ENCODE measurements at regions of chr3 and their contacts with region 1.

Region 1: GRCh38 chr3:184656829-184657681 is 54.8 kb downstream of the MAGEF1 start:
- DNase-seq: peak; percentile 98
- H3K4me3 ChIP-seq: no peak overlapping the region
- H3K27ac ChIP-seq: peak overlapping the region; percentile 93
- H3K4me1 ChIP-seq: peaks cover 50% of the 10 kb centered on the region
- H3K27me3 ChIP-seq: no peaks in the 10 kb centered on the region
- CTCF ChIP-seq: no peak

Region 2: GRCh38 chr3:184428561-184429175 is 228.4 kb before region 1 on chr3:
- CTCF ChIA-PET with region 1: no interaction called
- dilution Hi-C with region 1: no loop called
- in situ Hi-C with region 1: no loop called
- intact Hi-C with region 1: no loop called
- DNase-seq: no peak
- H3K4me3 ChIP-seq: no peak overlapping the region
- H3K27ac ChIP-seq: no peak overlapping the region
- H3K4me1 ChIP-seq: peaks cover 5% of the 10 kb centered on the region
- H3K27me3 ChIP-seq: peaks cover 3% of the 10 kb centered on the region
- CTCF ChIP-seq: no peak

Region 3: DNA sequence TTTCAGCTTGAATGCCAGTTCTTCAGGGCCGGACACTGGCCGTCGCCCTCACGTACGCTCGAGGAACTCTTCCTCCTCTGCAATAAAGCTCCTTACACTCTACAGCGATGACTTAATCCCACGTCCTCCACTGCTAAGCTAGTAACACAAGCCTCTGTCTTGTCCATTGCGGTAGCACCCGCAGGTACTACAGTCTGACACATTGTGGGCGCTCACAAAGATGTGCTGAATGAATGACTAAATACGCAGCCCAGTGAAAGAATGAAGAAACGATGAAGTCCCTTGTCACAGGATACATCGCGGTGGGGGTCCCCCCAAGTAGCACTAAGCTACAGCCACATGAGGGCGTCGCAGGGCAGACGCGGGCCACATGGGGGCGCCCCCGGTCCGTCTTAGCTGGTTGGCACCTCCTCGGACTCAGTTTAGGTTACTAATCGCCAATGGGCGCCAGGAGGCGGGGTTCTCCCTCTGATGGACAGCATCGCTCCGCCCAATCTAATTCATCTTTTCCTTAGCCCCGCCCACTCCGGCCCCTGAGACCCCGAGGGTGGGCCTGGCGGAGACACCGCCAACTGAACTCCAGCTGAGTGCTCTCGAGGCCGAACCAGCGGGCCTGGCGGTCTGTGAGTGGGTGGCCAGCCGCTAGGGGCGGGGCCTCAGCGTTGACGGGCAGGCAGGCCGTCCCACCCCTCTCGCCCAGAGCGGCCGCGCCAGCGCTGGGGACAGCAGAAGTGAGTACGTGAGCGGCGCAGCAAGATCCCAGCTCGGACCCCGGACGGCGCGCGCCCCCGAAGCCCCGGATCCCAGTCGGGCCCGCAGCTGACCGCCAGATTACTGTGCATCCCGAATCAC is 95.8 kb before region 1 on chr3 and contains the start of gene EPHB3:
- CTCF ChIA-PET with region 1: no interaction called
- dilution Hi-C with region 1: no loop called
- in situ Hi-C with region 1: loop called in 1 of 2 experiments (anchors 5 kb)
- intact Hi-C with region 1: loop called (anchors 2 kb)
- DNase-seq: peak; percentile 99
- H3K4me3 ChIP-seq: peak within 1 kb of the TSS; percentile 67 to 92 (median 69)
- H3K27ac ChIP-seq: peak within 1 kb of the TSS; percentile 41
- H3K4me1 ChIP-seq: peaks cover 40% of the 10 kb centered on the region
- H3K27me3 ChIP-seq: no peaks in the 10 kb centered on the region
- CTCF ChIP-seq: peak; percentile 99 to 100
- total RNA-seq, gene EPHB3: 17.6 to 45.2 TPM

Region 4: DNA sequence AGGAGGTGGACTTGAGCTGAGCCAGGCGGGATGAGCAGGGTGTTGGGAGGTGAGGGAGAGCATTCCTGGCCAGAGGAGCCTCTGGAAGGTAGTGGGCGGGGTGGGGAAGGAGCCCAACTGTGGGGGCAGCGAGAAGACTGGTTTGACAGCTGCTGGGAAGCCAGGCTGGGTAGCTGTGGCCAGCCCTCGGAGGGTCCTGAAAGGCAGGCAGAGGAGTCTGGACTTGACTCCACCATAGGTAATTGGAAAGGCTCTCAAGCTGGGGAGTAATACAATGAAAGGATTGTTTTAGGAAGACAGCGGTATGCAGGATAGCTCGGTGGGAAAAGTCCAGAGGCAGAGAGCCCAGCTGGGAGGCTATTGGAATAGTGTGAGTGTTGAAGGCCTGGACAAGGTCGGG is 78.2 kb before region 1 on chr3:
- CTCF ChIA-PET with region 1: interaction called, 13 read pairs
- dilution Hi-C with region 1: no loop called
- in situ Hi-C with region 1: no loop called
- intact Hi-C with region 1: no loop called
- DNase-seq: peak; percentile 50
- H3K4me3 ChIP-seq: no peak overlapping the region
- H3K27ac ChIP-seq: peak overlapping the region; percentile 9
- H3K4me1 ChIP-seq: peaks cover 26% of the 10 kb centered on the region
- H3K27me3 ChIP-seq: no peaks in the 10 kb centered on the region
- CTCF ChIP-seq: no peak

Region 5: GRCh38 chr3:184611607-184612281 is 45.3 kb before region 1 on chr3:
- CTCF ChIA-PET with region 1: no interaction called
- dilution Hi-C with region 1: loop called (anchors 5 kb)
- in situ Hi-C with region 1: no loop called
- intact Hi-C with region 1: no loop called
- DNase-seq: no peak
- H3K4me3 ChIP-seq: no peak overlapping the region
- H3K27ac ChIP-seq: no peak overlapping the region
- H3K4me1 ChIP-seq: no peaks in the 10 kb centered on the region
- H3K27me3 ChIP-seq: no peaks in the 10 kb centered on the region
- CTCF ChIP-seq: no peak

Region 6: DNA sequence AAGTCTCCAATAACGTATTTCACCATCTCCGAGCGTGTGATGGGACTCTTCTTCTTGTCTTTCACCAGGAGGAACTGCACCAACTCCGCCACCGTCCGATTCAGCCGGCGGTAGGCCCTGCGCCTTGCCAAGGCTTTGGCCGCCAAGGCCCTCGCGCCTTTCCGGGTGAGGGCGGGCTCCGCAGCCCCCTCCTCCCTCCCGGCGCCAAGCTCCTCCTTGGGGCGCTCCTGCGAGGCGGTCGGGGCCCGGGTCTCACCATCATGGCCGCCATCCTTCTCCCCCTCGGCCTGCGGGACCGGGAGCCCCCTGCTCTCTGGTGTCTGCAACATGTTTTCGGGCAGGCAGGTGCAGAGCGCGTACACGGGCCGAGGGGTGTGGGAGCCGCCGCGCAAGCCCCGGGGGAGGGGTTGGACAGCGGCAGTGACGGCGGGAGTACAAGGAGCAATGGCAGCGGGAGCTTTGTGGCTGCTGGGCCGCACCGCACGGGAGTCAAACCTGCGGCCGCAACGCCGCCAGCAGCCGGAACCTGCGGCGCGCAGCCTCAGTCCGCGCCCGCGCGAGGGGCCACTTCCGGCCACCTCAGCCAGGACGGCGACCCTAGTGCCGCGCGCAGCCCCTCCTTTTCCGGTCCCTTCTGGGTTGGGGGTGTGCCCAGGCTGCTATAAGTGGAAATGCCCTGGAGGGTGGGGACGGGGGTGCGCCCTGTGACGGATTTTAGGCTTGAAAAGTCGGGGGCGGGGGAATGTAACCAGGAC is 54.6 kb after region 1 on chr3 and contains the start of gene MAGEF1:
- CTCF ChIA-PET with region 1: no interaction called
- dilution Hi-C with region 1: no loop called
- in situ Hi-C with region 1: no loop called
- intact Hi-C with region 1: loop called (anchors 5 kb)
- DNase-seq: peak; percentile 77
- H3K4me3 ChIP-seq: peak within 1 kb of the TSS; percentile 74 to 90 (median 83)
- H3K27ac ChIP-seq: peak within 1 kb of the TSS; percentile 80
- H3K4me1 ChIP-seq: peaks cover 16% of the 10 kb centered on the region
- H3K27me3 ChIP-seq: no peaks in the 10 kb centered on the region
- CTCF ChIP-seq: no peak
- total RNA-seq, gene MAGEF1: 19.0 to 27.8 TPM

Region 7: DNA sequence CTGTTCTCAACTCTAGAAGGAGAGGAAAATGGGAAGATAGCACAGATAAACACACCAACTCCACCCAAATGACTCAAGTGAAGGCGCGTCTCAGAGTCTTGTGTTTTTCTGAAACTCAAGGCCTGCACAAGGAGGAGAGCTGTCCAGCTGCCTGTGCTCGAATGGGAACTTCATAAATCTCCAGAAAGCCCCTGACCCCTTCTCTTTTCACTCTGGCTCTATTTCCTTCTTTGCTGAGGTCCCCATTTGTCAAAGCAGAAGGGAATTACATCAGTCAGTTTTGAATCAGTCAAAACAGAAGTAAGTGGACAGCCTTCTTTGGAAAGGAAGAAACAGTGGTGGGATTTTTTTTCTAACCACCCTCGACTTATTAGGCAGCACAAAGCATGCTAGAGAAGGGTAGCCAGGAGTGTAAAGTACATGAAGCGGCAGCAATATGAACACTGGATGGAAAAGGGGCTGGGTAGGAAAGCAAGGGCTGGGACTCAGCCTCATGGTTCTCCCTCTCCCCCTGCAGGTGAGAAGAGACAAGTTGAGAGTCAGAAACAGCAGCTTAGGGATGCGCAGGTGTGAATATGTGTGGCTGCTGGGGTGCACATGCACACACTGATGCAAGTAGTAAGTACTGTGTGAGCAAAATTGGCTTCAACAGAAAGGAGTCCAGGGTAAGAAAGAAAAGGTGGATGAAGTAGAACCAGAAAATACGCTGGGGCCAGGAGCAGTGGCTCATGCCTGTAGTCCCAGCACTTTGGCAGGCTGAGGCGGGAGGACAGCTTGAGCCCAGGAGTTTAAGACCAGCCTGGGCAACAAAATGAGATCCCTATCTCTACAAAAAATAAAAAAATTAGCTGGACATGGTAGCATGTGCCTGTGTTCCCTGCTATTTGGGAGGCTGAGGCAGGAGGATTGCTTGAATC is 91.4 kb after region 1 on chr3:
- CTCF ChIA-PET with region 1: no interaction called
- dilution Hi-C with region 1: no loop called
- in situ Hi-C with region 1: no loop called
- intact Hi-C with region 1: loop called (anchors 10 kb)
- DNase-seq: peak; percentile 83
- H3K4me3 ChIP-seq: no peak overlapping the region
- H3K27ac ChIP-seq: peak overlapping the region; percentile 54
- H3K4me1 ChIP-seq: peaks cover 8% of the 10 kb centered on the region
- H3K27me3 ChIP-seq: no peaks in the 10 kb centered on the region
- CTCF ChIP-seq: peak; percentile 74 to 93

Region 8: GRCh38 chr3:184937611-184938010 is 280.6 kb after region 1 on chr3:
- CTCF ChIA-PET with region 1: no interaction called
- dilution Hi-C with region 1: no loop called
- in situ Hi-C with region 1: no loop called
- intact Hi-C with region 1: no loop called
- DNase-seq: no peak
- H3K4me3 ChIP-seq: no peak overlapping the region
- H3K27ac ChIP-seq: no peak overlapping the region
- H3K4me1 ChIP-seq: no peaks in the 10 kb centered on the region
- H3K27me3 ChIP-seq: no peaks in the 10 kb centered on the region
- CTCF ChIP-seq: no peak

Region 9: GRCh38 chr3:186152889-186153292 is 1495.8 kb after region 1 on chr3:
- CTCF ChIA-PET with region 1: no interaction called
- dilution Hi-C with region 1: no loop called
- in situ Hi-C with region 1: no loop called
- intact Hi-C with region 1: no loop called
- DNase-seq: no peak
- H3K4me3 ChIP-seq: no peak overlapping the region
- H3K27ac ChIP-seq: no peak overlapping the region
- H3K4me1 ChIP-seq: no peaks in the 10 kb centered on the region
- H3K27me3 ChIP-seq: no peaks in the 10 kb centered on the region
- CTCF ChIP-seq: no peak

Measured in mammary epithelial cell (primary cell).